ENCODE measurements at regions of chr2 and their contacts with region 1.

Region 1: GRCh38 chr2:125004091-125004800 is 979.2 kb downstream of the CNTNAP5 start:
- DNase-seq: no peak
- ATAC-seq: no peak
- H3K4me3 ChIP-seq: no peak overlapping the region
- H3K27ac ChIP-seq: no peak overlapping the region
- H3K4me1 ChIP-seq: no peaks in the 10 kb centered on the region
- H3K27me3 ChIP-seq: no peaks in the 10 kb centered on the region
- CTCF ChIP-seq: no peak
- POLR2A ChIP-seq: no peak
- RAD21 ChIP-seq: no peak

Region 2: DNA sequence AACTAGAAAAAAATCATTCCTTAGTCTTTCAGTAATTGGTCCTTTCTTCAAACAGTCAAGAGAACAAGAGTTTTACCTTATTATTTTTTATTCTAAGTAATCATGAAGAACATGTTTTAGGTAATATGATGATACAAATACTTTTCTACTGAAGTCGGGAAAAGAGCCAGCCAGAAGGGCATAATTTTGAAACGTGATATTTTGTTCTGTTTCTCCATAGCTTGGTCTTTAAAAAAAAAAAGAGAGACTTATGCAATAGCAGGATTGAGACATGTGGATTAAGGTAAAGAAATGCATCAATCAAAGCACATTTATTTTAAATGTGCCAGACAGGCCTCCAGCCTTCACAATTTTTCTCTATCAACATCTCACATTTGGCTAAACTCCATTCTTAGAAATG is 37.6 kb after region 1 on chr2:
- CTCF ChIA-PET with region 1: no interaction called
- POLR2A ChIA-PET with region 1: no interaction called
- RAD21 ChIA-PET with region 1: no interaction called
- intact Hi-C with region 1: loop called (anchors 5 kb)
- DNase-seq: no peak
- ATAC-seq: no peak
- H3K4me3 ChIP-seq: no peak overlapping the region
- H3K27ac ChIP-seq: no peak overlapping the region
- H3K4me1 ChIP-seq: no peaks in the 10 kb centered on the region
- H3K27me3 ChIP-seq: no peaks in the 10 kb centered on the region
- CTCF ChIP-seq: no peak
- POLR2A ChIP-seq: no peak
- RAD21 ChIP-seq: no peak